AG04450 (cell line): ENCODE measurements at regions of chr2 and their contacts with region 1.

Region 1: DNA sequence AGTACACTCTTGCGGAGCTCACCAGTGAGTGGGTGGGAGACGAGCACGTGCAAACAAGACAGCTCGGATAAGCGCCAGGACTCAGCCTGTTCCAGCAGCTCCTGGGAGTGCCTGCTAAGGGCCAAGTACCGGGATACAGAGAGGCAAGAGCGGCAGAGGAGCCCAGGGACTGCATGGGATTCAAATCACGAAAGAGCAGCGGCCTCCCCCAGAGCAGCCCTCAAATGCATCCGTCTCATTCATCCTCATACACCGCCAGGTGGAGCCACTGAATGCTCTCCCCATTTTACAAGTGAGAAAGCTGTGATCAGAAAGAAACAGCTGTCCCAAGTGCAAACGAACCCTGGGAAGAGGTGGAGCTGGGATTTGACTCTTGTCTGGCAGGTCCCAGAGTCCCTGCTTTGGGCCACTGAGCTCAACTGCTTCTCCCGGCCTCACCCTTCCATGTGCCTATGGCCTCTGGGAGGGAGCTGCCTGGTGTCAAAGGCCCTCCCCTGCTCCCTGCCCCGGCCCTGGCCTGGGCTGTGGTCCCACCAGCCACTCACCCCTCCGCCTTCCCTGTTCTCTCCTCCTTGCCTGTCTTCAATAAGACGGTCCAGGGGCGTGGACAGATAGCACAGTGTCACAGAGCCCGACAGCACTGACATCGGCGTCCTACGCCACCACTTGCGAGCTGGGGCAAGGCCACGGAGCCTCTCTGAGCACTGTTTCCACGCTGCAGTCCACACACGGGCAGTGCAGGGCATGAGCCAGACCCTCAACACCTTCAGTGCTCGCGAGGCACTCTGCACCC is 72.8 kb upstream of the TAF1B start:
- DNase-seq: peak; percentile 26
- H3K4me3 ChIP-seq: peak overlapping the region; percentile 10; the same call in 1 of the 2 replicates
- H3K27ac ChIP-seq: peak overlapping the region; percentile 21
- H3K27me3 ChIP-seq: no peaks in the 10 kb centered on the region
- CTCF ChIP-seq: peak; percentile 78

Region 2: DNA sequence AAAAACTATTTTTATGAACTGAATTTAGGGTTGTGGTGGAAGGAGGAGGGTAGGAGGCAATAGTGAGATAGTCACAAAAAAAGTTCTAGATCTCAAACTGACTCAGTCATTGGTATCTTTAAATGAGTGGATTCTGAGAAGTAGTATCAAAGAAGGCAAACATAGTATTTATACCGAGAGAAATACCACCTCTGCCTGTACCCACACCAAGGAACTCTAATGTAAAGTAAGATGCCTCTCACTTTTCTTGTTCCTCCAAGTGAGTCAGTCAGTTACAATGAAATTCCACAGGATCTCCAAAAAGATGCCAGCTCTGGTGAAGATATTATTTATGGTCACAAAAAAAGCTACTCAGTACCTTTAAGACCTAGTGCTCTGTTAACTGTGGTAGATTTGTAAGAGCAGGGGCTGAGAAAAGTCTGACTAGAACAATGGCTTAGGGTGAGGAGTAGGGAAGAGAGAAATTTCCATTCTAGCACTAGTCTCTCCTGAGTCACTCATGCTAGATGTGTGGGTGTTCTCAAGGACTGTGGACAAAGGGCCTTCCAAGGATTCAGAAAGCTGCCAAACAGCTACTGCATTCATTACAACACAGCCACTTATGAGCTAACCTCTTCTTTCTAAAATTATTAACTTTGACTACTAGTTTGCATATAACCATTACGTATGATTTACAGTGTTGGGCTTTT is 176.0 kb before region 1 on chr2:
- CTCF ChIA-PET with region 1: interaction called, 10 read pairs
- POLR2A ChIA-PET with region 1: no interaction called
- DNase-seq: peak; percentile 50
- H3K4me3 ChIP-seq: no peak overlapping the region
- H3K27ac ChIP-seq: peak overlapping the region; percentile 33
- H3K27me3 ChIP-seq: no peaks in the 10 kb centered on the region
- CTCF ChIP-seq: no peak

Region 3: DNA sequence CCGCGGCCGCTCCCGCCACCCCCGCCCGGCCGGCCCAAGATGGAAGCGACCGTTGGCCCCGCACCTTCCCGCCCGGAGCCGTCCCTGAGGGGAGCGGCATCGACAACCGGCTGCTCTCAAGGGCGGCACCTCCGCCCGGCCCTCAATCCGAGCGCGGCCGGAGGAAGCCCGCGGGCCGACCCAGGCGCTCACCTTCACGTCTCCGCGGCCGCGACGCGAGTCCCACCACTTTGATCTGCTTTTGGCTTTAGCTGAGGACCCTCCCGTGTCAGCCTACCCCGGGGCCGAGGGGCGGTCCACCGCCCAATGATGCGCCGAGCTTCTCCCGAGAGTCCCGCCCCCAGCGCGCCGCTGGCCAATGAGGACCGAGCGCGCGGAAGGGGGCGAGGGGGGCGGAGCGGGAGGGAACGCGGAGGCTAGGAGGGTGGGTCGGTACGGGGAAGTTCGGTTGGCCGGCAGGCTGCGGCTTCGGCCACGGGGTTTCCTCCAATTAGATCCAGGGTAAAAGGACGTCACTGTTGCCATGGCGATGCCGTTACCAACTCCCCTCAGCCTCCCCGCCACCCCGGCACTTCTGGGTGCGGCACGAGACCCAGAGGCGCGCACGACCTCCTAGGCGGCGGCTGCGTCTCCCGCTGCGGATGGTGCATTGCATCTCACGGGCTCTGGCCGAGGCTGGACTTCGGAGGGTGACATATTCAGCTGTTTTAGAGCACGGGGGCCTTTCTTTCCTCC is 139.6 kb before region 1 on chr2 and contains the start of gene YWHAQ:
- CTCF ChIA-PET with region 1: interaction called, 12 read pairs
- POLR2A ChIA-PET with region 1: interaction called, 8 read pairs
- DNase-seq: peak; percentile 98
- H3K4me3 ChIP-seq: peak within 1 kb of the TSS; percentile 96
- H3K27ac ChIP-seq: peak within 1 kb of the TSS; percentile 81
- H3K27me3 ChIP-seq: no peaks in the 10 kb centered on the region
- CTCF ChIP-seq: no peak
- polyA plus RNA-seq, gene YWHAQ: 509 and 624 TPM in 2 replicates

Region 4: GRCh38 chr2:9753276-9753600 is 17.3 kb before region 1 on chr2:
- CTCF ChIA-PET with region 1: interaction called, 43 read pairs
- POLR2A ChIA-PET with region 1: no interaction called
- DNase-seq: peak; percentile 58
- H3K4me3 ChIP-seq: peak overlapping the region; percentile 42; the same call in 1 of the 2 replicates
- H3K27ac ChIP-seq: peak overlapping the region; percentile 85
- H3K27me3 ChIP-seq: no peaks in the 10 kb centered on the region
- CTCF ChIP-seq: no peak

Region 5: DNA sequence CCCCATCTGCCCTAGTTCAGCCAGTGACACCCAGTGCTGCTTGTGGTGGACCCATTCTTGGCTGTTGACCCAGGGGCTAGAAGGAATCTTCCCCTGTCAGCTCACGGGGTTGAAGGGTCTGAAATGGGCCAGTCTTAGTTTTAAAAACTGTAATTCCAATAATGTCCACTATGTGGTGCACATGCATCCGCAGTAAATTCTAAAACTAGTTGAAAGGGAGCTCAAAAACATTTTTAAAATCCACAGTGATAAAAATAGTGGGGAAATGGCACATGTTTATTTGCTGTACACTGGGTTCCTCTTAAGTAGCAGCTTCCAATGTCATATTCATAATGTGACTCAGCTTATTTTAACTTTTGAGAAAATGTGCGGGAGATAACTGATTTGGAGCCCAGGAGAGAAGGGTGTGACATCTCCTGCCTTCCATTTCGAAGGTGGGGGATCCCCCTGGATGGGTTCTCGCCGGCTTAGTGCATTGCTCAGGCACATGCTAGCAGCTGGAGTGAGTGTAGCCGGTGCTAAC is 213.8 kb after region 1 on chr2:
- CTCF ChIA-PET with region 1: interaction called, 13 read pairs
- POLR2A ChIA-PET with region 1: no interaction called
- DNase-seq: no peak
- H3K4me3 ChIP-seq: no peak overlapping the region
- H3K27ac ChIP-seq: no peak overlapping the region
- H3K27me3 ChIP-seq: no peaks in the 10 kb centered on the region
- CTCF ChIP-seq: peak; percentile 65

Region 6: DNA sequence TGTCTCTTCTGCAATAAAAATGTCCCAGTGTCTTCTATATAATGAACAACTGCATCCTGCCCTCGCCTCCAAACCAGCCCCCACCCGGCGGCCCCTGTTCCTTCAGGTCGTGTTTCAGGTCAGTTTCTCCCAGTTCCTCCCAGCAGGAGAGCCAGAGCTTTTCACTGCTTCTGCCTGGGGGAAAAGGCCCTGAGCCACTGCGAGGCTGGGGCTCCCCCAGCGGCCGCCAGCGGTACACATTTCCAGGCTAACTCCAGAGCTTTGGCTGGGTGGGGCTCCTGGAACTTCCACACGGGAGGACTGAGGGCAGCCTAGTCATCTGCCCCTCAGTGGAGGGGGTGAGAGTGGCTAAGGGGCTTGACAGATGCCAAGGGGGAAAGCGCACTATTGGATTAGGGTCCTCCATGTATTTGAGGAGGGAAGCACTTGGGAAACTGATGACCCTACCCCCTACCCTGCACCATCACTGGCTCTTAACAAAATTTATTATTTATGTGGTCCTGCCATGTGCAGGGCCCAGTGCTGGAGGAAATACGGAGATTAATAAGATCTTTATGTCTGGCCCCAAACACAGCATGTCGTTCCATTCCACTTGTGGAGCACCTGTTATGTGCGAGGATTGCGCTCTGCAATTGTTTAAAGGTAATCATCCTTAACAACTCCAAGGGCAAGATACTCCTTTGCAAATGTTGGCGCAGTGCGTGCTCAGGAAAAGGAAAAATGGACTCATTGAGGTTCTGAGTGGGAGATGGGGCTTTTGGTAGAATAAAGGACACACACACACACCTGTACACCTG is 327.0 kb after region 1 on chr2:
- CTCF ChIA-PET with region 1: interaction called, 11 read pairs
- POLR2A ChIA-PET with region 1: no interaction called
- DNase-seq: no peak
- H3K4me3 ChIP-seq: no peak overlapping the region
- H3K27ac ChIP-seq: no peak overlapping the region
- H3K27me3 ChIP-seq: peaks cover 2% of the 10 kb centered on the region
- CTCF ChIP-seq: peak; percentile 95